BJ (cell line): ENCODE measurements at regions of chr2 and their contacts with region 1.

Region 1: DNA sequence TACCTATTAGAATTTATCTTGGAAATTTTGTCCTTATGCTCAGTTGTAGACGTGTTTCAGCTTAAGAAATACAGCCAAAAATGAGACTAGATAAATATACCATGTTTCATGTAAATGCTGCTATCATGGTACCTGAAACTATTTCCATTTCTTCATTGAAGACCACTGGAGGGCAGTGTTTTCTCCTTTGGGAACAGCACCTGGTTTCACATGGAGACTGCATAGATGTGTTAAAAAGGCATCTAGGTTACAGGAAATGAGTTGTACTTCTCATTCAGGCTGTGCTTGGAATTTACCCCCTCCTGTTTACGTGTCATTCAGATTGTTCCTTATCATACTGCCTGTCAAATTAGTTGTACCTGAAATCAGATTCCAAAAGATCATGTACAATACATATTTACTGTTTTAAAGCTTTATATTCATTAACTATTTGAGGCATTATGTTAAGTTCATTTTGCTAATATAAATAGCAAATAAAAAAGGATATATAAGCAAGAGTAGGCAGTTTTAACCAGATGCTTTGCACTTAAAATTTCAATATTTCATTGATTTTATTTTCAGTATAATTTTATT is 57.3 kb upstream of the PSMD14 start:
- DNase-seq: no peak
- H3K4me3 ChIP-seq: no peak overlapping the region
- H3K27me3 ChIP-seq: peaks cover 8% of the 10 kb centered on the region
- CTCF ChIP-seq: peak; percentile 72

Region 2: DNA sequence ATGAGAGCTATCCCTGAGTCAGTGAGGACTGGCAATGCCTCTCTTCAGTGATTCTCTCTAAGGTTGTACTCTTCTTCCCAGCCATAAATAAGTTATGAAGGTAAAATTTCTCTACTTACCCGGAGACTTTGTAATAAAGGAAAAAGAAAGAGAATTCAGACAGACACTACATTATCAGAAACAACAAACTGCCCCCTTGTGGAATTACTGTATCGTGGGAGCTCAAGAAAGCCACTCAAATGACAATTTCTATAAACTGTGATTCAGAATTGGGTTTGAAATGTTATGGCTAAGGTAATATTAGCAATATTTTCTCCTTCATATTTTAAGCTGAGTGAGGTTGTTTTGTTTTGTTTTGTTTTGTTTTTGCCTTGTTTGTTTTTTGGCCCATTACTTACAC is 246.6 kb before region 1 on chr2:
- CTCF ChIA-PET with region 1: no interaction called
- POLR2A ChIA-PET with region 1: no interaction called
- DNase-seq: no peak
- H3K4me3 ChIP-seq: no peak overlapping the region
- H3K27me3 ChIP-seq: no peaks in the 10 kb centered on the region
- CTCF ChIP-seq: peak; percentile 54

Region 3: GRCh38 chr2:161190050-161190449 is 60.9 kb before region 1 on chr2:
- CTCF ChIA-PET with region 1: no interaction called
- POLR2A ChIA-PET with region 1: no interaction called
- DNase-seq: no peak
- H3K4me3 ChIP-seq: no peak overlapping the region
- H3K27me3 ChIP-seq: no peaks in the 10 kb centered on the region
- CTCF ChIP-seq: no peak

Region 4: GRCh38 chr2:161265874-161266273 is 14.9 kb after region 1 on chr2:
- CTCF ChIA-PET with region 1: interaction called, 13 read pairs
- POLR2A ChIA-PET with region 1: no interaction called
- DNase-seq: no peak
- H3K4me3 ChIP-seq: no peak overlapping the region
- H3K27me3 ChIP-seq: no peaks in the 10 kb centered on the region
- CTCF ChIP-seq: no peak

Region 5: DNA sequence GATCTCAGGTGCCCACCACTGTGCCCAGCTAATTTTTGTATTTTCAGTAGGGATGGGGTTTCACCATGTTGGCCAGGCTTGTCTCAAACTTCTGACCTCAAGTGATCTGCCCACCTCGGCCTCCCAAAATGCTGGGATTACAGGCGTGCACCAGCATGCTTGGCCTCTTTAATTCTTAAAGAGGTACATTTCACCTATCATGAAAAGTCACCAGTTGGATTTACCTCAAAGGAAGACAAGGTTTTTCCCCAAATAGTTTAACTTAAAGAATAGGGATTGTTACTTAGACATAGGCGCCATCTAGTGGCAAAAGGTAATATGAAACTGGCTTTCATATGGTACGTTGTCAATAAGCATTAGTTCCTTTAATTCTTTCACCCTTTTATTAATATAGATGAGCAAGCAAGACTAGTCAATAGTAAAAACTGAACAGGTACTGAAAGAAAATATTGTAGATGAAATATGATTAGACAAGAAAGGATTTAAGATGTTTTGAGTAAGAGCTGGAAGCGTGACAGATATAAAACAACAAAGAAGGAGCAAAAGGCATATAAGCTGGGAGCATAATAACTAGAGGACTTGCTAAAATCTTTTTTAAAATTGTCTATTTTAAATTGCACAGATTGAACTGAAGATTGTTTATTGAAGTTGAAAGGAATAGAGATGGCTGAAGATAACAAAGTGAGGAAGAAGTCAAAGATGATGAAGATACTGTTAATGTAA is 22.2 kb after region 1 on chr2:
- CTCF ChIA-PET with region 1: interaction called, 10 read pairs
- POLR2A ChIA-PET with region 1: no interaction called
- DNase-seq: no peak
- H3K4me3 ChIP-seq: no peak overlapping the region
- H3K27me3 ChIP-seq: no peaks in the 10 kb centered on the region
- CTCF ChIP-seq: peak; percentile 62

Region 6: DNA sequence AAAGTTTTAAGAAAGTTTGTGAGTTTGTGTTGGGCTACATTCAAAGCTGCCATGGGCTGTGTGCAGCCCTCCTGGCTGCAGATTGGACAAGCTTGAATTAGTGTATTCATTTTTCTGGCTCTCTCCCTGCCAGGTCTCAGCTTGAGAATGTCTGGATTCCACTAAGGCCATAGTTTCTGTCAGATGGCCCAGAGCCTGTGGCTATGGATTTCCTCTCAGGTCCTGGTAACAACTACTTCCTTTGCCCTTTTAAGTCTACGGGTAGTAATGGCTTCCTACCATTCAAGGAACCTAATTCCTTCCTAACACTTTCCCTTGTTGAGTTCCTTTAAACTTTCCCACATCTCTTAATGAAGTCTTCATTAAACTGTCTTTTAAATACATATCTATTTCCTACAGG is 33.0 kb after region 1 on chr2:
- CTCF ChIA-PET with region 1: no interaction called
- POLR2A ChIA-PET with region 1: no interaction called
- DNase-seq: no peak
- H3K4me3 ChIP-seq: no peak overlapping the region
- H3K27me3 ChIP-seq: no peaks in the 10 kb centered on the region
- CTCF ChIP-seq: no peak

Region 7: GRCh38 chr2:161344692-161345091 is 93.7 kb after region 1 on chr2:
- CTCF ChIA-PET with region 1: no interaction called
- POLR2A ChIA-PET with region 1: no interaction called
- DNase-seq: no peak
- H3K4me3 ChIP-seq: no peak overlapping the region
- H3K27me3 ChIP-seq: no peaks in the 10 kb centered on the region
- CTCF ChIP-seq: no peak